ENCODE measurements at regions of chr20 and their contacts with region 1.

Region 1: DNA sequence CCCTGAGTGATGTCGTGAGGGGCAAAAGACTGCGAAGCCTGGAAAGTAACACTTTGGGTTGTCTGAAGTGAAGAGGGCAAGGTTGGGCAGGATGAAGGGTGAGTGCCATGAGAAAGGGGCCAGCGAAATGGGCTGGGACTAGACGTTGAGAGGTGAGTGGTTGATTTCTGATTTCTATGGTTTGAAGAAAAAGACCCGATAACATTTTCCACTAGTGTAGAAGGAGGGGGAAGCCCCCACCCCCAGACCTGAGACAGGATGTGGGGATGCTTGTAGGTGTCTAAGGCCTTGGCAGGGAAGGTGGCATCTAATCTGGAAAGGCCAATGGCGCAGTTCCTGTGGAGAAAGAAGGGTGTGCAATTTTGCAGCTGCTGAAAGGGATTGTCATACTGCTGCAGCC is 25.3 kb upstream of the KIF3B start:
- DNase-seq: no peak
- ATAC-seq: peak; percentile 47
- H3K4me3 ChIP-seq: no peak overlapping the region
- H3K27ac ChIP-seq: no peak overlapping the region
- H3K4me1 ChIP-seq: peaks cover 8% of the 10 kb centered on the region
- H3K27me3 ChIP-seq: no peaks in the 10 kb centered on the region
- CTCF ChIP-seq: no peak
- EP300 ChIP-seq: no peak
- POLR2A ChIP-seq: no peak
- RAD21 ChIP-seq: no peak

Region 2: GRCh38 chr20:32277361-32278198 is 25.4 kb after region 1 on chr20 and contains the start of gene KIF3B:
- CTCF ChIA-PET with region 1: interaction called, 3 read pairs
- POLR2A ChIA-PET with region 1: interaction called, 5 read pairs
- RAD21 ChIA-PET with region 1: no interaction called
- SMC1A ChIA-PET with region 1: interaction called, 12 read pairs
- in situ Hi-C with region 1: no loop called
- intact Hi-C with region 1: no loop called
- DNase-seq: peak; percentile 61
- ATAC-seq: peak; percentile 84
- H3K4me3 ChIP-seq: peak within 1 kb of the TSS; percentile 98
- H3K27ac ChIP-seq: peak within 1 kb of the TSS; percentile 81
- H3K4me1 ChIP-seq: peaks cover 11% of the 10 kb centered on the region
- H3K27me3 ChIP-seq: no peaks in the 10 kb centered on the region
- CTCF ChIP-seq: no peak
- EP300 ChIP-seq: no peak; a peak in 1 of 4 replicates
- POLR2A ChIP-seq: peak; percentile 57; the same call in 1 of the 2 replicates
- RAD21 ChIP-seq: no peak
- polyA plus RNA-seq, gene KIF3B: 10.7 to 11.2 TPM

Region 3: GRCh38 chr20:32418376-32418775 is 166.2 kb after region 1 on chr20:
- CTCF ChIA-PET with region 1: no interaction called
- POLR2A ChIA-PET with region 1: no interaction called
- RAD21 ChIA-PET with region 1: no interaction called
- SMC1A ChIA-PET with region 1: no interaction called
- in situ Hi-C with region 1: no loop called
- intact Hi-C with region 1: no loop called
- DNase-seq: no peak
- ATAC-seq: no peak
- H3K4me3 ChIP-seq: no peak overlapping the region
- H3K27ac ChIP-seq: no peak overlapping the region
- H3K4me1 ChIP-seq: peaks cover 8% of the 10 kb centered on the region; the same call in 1 of the 2 replicates
- H3K27me3 ChIP-seq: no peaks in the 10 kb centered on the region
- CTCF ChIP-seq: no peak
- EP300 ChIP-seq: no peak
- POLR2A ChIP-seq: no peak
- RAD21 ChIP-seq: no peak